ENCODE measurements at regions of chr3 and their contacts with region 1.

Region 1: GRCh38 chr3:149487598-149488197 is 13.2 kb downstream of the TM4SF4 start:
- DNase-seq: peak; percentile 19 to 43 (median 33)
- ATAC-seq: peak; percentile 78
- H3K4me3 ChIP-seq: no peak overlapping the region
- H3K27ac ChIP-seq: no peak overlapping the region
- H3K4me1 ChIP-seq: no peaks in the 10 kb centered on the region
- H3K27me3 ChIP-seq: no peaks in the 10 kb centered on the region
- CTCF ChIP-seq: peak; percentile 36 to 62 (median 42)
- EP300 ChIP-seq: no peak
- POLR2A ChIP-seq: no peak
- RAD21 ChIP-seq: no peak

Region 2: GRCh38 chr3:149120051-149120972 is 367.4 kb before region 1 on chr3:
- CTCF ChIA-PET with region 1: no interaction called
- POLR2A ChIA-PET with region 1: no interaction called
- in situ Hi-C with region 1: loop called (anchors 10 kb)
- intact Hi-C with region 1: loop called (anchors 5 kb)
- DNase-seq: peak in 3 of 4 experiments; percentile 12 to 68 (median 52)
- ATAC-seq: peak; percentile 87
- H3K4me3 ChIP-seq: no peak overlapping the region
- H3K27ac ChIP-seq: no peak overlapping the region
- H3K4me1 ChIP-seq: no peaks in the 10 kb centered on the region
- H3K27me3 ChIP-seq: peaks cover 0 to 9% of the 10 kb centered on the region in 2 experiments; a peak in 2 of 5 replicates
- CTCF ChIP-seq: peak; percentile 55 to 85 (median 73)
- EP300 ChIP-seq: no peak
- POLR2A ChIP-seq: no peak
- RAD21 ChIP-seq: peak; percentile 97

Region 3: DNA sequence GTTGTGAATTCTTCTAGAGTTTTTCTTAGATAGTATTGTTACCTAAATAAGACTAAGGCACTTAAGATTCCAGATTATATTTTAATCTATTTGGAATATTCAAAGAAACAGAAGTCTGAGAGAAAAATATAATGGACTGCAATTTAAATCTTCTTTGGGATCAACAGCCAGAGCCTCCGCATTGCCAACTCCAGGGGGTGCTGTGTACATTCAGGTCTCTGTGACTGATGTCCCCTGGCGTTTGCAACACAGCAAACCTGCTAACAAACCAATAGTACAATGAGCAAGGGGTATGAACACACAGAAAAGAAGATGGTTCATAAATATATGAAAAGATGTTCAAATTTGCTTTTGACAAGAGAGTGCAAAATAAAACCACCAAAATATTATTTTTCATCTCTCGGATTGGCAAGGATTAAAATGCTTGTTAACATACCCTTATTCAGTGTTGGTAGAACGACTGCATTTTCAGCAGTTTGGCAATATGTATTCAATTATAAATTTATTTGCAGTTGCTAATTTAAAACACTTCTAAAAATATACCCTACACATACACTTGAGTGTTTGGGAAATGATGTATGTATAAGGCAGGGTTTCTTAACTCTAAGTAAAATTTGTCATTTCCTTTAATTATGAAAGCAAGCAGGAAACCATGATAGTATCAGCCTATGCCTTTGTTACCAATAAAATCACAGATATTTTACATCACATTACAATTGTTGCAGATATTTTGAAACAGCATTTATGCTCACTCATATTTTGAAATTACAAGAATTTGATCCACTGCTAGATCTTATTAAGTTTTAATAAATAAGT is 94.1 kb before region 1 on chr3:
- CTCF ChIA-PET with region 1: no interaction called
- POLR2A ChIA-PET with region 1: no interaction called
- in situ Hi-C with region 1: no loop called
- intact Hi-C with region 1: loop called (anchors 2 kb)
- DNase-seq: peak; percentile 35 to 61 (median 48)
- ATAC-seq: peak; percentile 97
- H3K4me3 ChIP-seq: no peak overlapping the region
- H3K27ac ChIP-seq: no peak overlapping the region
- H3K4me1 ChIP-seq: no peaks in the 10 kb centered on the region
- H3K27me3 ChIP-seq: peaks cover 0 to 5% of the 10 kb centered on the region in 2 experiments; a peak in 2 of 5 replicates
- CTCF ChIP-seq: peak; percentile 75 to 99 (median 93)
- EP300 ChIP-seq: no peak
- POLR2A ChIP-seq: no peak
- RAD21 ChIP-seq: peak; percentile 74

Region 4: DNA sequence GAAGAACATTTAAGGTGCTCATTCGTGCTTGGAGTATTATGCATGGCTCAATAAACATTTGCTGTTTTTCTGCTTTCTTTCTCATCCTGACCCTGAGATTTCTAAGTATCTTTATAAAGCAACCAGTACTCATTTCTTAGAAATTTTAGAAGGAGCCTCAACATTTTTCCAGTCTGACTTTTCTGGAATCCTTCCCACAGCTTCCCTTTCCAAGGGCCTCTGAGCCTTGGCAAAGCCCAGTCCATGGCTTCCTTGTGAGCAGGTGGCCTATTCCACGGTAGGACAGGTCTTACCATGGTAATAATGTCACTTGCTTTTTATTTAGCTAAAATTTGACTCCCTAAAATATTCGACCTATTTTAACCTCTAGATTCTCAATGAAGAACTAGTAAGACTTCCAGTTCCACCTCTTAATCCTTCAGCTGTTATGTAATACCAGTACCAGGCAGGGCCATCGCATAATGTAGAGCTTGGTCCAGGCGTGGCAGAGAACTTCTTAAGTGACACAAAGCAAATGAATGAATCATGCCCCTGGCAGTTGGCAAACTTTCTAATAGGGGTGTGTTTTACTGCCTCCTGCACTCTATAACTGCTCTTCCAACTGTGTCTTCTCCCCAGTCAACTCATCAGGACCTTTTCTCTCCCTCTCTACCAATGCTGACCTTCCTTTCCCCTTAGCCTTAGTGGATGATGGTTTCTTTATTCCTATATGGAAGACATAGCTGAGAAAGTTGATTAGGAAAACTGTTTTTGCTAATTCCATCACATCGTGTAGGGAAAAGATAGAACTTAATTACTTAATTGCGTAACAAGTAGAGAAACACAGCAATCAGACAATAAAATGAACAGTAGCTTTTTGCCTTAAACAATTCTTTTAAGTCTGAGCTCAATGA is 14.1 kb before region 1 on chr3:
- CTCF ChIA-PET with region 1: no interaction called
- POLR2A ChIA-PET with region 1: no interaction called
- in situ Hi-C with region 1: no loop called
- intact Hi-C with region 1: no loop called
- DNase-seq: no peak
- ATAC-seq: no peak
- H3K4me3 ChIP-seq: no peak overlapping the region
- H3K27ac ChIP-seq: no peak overlapping the region
- H3K4me1 ChIP-seq: no peaks in the 10 kb centered on the region
- H3K27me3 ChIP-seq: peaks cover 0 to 4% of the 10 kb centered on the region in 2 experiments; a peak in 1 of 5 replicates
- CTCF ChIP-seq: no peak
- EP300 ChIP-seq: no peak
- POLR2A ChIP-seq: no peak
- RAD21 ChIP-seq: no peak

Measured in K562 (cell line).